Activated CD4-positive, alpha-beta T cell treated with anti-CD3 and anti-CD28 coated beads, Interleukin-2, amount 10 ng/mL, durations not matched to agents 7 days and 5 days (primary cell): ENCODE measurements at regions of chr12 and their contacts with region 1.

Region 1: DNA sequence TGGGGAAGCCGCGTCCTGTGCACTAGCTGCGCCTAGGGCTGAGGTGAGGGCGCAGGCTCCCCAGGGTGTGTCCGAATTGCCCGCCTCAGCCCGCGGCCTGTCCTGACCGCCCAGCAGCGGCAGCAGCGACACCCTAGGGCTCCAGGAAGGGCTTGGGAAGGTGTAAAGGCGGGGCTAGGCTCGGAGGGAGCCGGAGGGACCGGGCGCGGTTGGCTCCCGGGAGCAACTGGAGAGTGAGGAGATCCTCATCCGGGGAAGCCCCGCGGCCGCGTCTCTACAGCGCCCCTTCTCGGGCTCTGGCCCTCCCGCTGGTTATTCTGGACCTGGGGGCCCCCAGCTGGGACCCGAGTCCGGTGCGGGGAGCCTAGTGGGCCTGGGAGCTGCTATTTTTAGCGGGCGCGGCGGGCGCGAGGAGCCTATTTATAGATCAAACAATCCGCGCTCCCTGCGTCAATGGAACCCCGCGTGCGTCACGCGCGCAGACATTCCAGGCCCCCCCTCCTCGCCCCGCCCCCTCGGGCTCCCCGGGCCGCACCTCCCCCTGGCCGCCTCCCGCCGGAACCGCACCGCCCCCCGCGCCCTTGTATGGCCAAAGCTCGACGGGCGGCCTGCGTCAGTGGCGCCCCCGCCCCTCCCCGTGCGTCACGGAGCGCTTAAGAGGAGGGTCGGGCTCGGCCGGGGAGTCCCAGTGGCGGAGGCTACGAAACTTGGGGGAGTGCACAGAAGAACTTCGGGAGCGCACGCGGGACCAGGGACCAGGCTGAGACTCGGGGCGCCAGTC is at the start of gene NR4A1:
- DNase-seq: peak; percentile 97
- H3K4me3 Mint-ChIP-seq: peak within 1 kb of the TSS; percentile 86
- H3K27ac Mint-ChIP-seq: peak within 1 kb of the TSS; percentile 97
- H3K4me1 Mint-ChIP-seq: peaks cover 46% of the 10 kb centered on the region
- H3K27me3 Mint-ChIP-seq: peaks cover 9% of the 10 kb centered on the region
- total RNA-seq, gene NR4A1: 2.1 to 2.7 TPM

Region 2: GRCh38 chr12:52032804-52033502 is 18.0 kb before region 1 on chr12:
- CTCF ChIA-PET with region 1: interaction called, 225 read pairs
- POLR2A ChIA-PET with region 1: no interaction called
- DNase-seq: peak; percentile 93
- H3K4me3 Mint-ChIP-seq: peak overlapping the region; percentile 58
- H3K27ac Mint-ChIP-seq: peak overlapping the region; percentile 73
- H3K4me1 Mint-ChIP-seq: peaks cover 32% of the 10 kb centered on the region
- H3K27me3 Mint-ChIP-seq: peaks cover 29% of the 10 kb centered on the region

Region 3: DNA sequence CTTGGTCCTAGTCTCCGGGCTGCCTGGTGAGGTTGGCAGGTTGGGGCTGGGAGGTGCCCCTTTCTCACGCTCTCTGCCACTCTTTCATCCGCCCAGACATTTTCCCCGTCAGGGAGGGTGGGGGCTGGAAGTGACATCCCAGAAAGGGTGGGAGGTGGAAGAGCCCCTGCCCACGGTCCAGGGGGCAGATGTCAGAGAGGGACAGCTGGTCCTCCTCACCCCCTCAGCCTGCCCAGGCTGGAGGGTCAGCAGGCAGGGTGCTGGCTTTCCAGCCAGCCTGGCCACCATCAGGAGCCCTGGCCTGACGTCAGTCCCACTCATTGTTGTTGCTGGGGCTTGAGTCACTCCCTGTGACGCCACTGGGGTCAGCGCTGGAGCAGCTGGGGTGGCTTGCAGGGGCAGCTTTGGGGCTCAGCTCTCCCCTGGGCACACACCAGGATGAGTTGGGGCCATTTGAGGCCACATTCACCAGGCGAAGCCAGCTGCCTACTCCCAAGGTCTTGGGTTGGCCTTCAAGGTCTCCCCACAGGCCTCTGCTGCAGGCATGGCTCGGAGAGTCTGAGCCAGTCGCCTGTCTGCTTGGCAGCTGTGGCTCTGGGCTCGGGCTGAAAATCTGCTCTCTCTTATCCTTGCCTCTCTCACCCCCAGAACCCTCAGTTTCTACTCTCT is 13.2 kb after region 1 on chr12:
- CTCF ChIA-PET with region 1: interaction called, 12 read pairs
- POLR2A ChIA-PET with region 1: no interaction called
- DNase-seq: no peak
- H3K4me3 Mint-ChIP-seq: no peak overlapping the region
- H3K27ac Mint-ChIP-seq: no peak overlapping the region
- H3K4me1 Mint-ChIP-seq: peaks cover 11% of the 10 kb centered on the region
- H3K27me3 Mint-ChIP-seq: peaks cover 7% of the 10 kb centered on the region